OCI-LY7 (cell line): ENCODE measurements at regions of chr14 and their contacts with region 1.

Region 1: GRCh38 chr14:52741865-52742264 is 11.9 kb downstream of the STYX start:
- DNase-seq: peak; percentile 26
- H3K4me3 ChIP-seq: peak overlapping the region; percentile 50
- H3K27ac ChIP-seq: peak overlapping the region; percentile 93
- H3K4me1 ChIP-seq: peaks cover 27% of the 10 kb centered on the region
- CTCF ChIP-seq: no peak

Region 2: DNA sequence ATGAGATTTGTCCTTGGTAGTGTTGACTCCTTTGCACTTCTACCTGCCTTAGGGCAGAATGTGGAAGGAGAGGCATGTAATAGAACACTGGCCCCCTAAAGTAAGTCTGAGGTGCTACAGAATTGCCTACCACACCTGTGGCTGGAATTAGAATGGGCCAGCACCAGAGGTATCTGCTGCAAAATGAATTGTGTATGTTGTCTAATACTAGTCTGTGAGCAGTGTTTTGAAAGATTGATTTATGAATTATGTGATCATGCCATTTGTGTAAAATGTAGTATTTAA is 17.6 kb before region 1 on chr14:
- CTCF ChIA-PET with region 1: interaction called, 3 read pairs
- POLR2A ChIA-PET with region 1: interaction called, 13 read pairs
- intact Hi-C with region 1: no loop called
- DNase-seq: no peak
- H3K4me3 ChIP-seq: no peak overlapping the region
- H3K27ac ChIP-seq: no peak overlapping the region
- H3K4me1 ChIP-seq: peaks cover 33% of the 10 kb centered on the region
- CTCF ChIP-seq: no peak

Region 3: DNA sequence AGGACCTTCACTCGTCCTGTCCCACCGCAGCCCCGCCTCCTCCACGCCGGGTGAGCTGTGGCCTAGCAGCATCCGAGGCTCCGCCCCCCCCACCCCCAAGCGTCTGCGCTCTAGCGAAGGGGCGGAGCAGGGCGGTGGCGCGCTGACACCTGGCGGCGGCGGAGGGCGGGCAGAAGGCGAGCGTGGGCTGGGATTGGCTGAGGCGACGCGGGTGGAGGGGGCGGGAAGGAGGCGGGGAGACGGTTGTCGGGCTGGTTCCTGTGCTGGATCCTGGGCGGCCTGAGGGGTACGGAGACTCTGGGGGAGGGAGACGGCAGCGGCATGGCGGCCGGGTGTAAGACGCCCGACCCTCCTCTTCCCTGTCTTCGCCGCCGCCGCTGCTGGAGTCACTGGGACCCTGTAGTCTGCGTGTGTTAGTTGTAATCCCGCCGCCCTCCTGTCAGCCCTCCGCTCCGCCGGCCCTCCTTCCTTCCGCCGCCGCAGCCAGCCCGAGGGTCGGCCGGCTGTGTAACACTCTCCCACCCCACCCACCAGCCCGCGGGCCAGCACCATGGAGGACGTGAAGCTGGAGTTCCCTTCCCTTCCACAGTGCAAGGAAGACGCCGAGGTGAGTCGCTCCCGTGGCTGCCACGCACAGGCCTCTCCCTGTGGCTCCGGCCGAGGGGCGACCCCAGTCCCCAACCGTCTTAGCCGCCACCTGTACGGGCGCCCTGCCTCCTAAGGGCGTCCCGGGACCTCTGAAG is 11.8 kb before region 1 on chr14 and contains the start of gene STYX:
- CTCF ChIA-PET with region 1: interaction called, 3 read pairs
- POLR2A ChIA-PET with region 1: interaction called, 13 read pairs
- intact Hi-C with region 1: no loop called
- DNase-seq: peak; percentile 98
- H3K4me3 ChIP-seq: peak within 1 kb of the TSS; percentile 90
- H3K27ac ChIP-seq: peak within 1 kb of the TSS; percentile 47
- H3K4me1 ChIP-seq: peaks cover 15% of the 10 kb centered on the region
- CTCF ChIP-seq: no peak
- total RNA-seq, gene STYX: 4.7 and 7.6 TPM in 2 replicates

Region 4: DNA sequence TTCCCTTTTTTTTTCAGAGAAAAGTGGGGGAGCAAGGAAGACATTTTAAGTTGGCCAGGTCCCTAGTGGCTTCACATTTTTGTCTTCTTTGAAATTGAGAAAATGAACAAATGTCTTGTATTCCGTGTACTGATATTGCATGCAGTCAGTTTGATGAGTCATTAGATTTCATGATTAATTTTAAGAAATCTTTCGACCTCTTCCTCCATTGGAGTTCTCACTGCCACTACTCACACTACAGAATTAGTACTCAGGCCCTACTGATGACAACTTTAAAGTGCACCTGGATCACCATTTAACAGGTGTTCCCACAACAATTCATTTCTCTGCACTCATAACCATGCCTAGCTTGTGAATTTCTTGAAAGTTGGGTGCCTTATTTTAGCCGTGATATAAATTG is 1875.6 kb after region 1 on chr14:
- CTCF ChIA-PET with region 1: no interaction called
- POLR2A ChIA-PET with region 1: interaction called, 10 read pairs
- intact Hi-C with region 1: no loop called
- DNase-seq: no peak
- H3K4me3 ChIP-seq: no peak overlapping the region
- H3K27ac ChIP-seq: no peak overlapping the region
- H3K4me1 ChIP-seq: no peaks in the 10 kb centered on the region
- CTCF ChIP-seq: no peak